Vagina (tissue), 2 donors: ENCODE measurements at regions of chr17 and their contacts with region 1.

Region 1: GRCh38 chr17:63478791-63479494 is 2.1 kb downstream of the ACE start:
- DNase-seq: no peak
- H3K4me3 ChIP-seq: no peak overlapping the region
- H3K27ac ChIP-seq: no peak overlapping the region
- H3K4me1 ChIP-seq: peaks cover 32% of the 10 kb centered on the region
- H3K27me3 ChIP-seq: no peaks in the 10 kb centered on the region
- CTCF ChIP-seq: peak in 2 of 3 experiments; percentile 61 to 66
- POLR2A ChIP-seq: no peak

Region 2: DNA sequence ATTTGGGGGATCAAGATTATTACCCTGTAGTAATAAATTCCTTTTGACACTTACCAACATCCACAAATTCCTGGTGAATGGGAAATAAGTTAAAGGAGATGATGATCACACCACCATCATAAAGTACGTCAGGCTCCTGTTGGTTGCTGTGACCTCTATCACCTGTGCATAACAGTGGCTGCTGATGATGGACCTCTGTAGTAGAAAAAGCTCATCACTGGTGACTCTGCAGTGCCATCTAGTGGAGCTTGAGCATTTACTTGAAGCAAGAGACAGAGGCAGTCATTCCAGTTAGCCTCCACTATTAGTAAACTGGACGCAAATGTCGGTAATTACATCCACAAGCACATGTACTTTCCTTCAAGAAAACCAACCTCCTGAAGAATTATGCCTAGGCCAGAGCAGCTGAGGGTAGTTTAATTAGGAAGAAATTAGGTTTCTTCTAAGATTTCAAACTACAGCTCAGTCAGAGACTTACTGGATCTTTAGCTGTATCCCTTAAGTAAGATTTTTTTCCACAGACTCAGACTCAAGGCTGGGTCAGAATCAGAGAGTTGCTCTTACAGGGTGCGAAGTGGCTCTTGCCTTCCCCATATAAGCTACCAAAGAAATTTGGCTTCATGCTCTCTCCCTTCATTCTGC is 72.1 kb before region 1 on chr17:
- intact Hi-C with region 1: no loop called
- DNase-seq: no peak
- H3K4me3 ChIP-seq: no peak overlapping the region
- H3K27ac ChIP-seq: no peak overlapping the region
- H3K4me1 ChIP-seq: no peaks in the 10 kb centered on the region
- H3K27me3 ChIP-seq: no peaks in the 10 kb centered on the region
- CTCF ChIP-seq: peak; percentile 59 to 81 (median 72)
- POLR2A ChIP-seq: no peak

Region 3: DNA sequence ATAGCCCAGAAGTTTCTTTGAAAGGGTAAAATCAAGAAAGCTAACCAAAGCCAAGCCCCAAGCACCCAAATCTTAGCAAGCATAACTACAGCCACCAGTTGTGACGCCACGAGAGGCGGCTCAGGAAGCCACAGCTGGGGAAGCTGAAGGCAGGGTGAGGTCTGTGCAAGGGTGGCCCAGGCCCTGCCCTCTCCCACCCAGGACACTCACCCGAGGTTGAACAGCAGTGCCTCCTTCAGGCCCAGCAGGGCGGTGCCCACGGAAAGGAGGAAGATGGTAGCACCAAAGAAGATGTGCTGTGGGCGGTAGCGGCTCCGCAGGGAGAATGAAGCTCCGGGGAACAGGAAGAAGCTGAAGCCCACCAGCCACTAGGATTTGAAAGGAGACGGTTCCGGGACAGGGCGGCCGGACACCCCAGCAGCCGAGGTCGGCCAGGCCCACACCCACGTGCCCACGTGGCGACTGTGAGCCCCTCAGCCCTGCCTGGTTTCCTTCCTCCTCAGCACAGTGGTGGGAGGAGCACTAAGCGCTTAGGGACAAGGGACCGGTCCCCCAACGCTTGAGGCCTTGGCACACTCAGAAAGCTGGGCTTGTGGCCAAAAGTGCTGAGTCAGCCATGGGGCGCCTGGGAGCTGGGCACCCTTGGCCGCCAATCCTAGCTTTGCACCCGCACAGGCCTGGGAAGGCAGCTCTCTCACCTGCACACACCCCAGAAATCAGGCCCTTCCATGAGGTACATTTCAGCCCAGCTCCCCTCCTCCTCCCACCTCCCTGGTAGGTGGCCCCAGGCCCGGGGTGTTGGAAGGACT is 43.9 kb before region 1 on chr17:
- intact Hi-C with region 1: loop called (anchors 5 kb)
- DNase-seq: no peak
- H3K4me3 ChIP-seq: no peak overlapping the region
- H3K27ac ChIP-seq: peak overlapping the region; percentile 69
- H3K4me1 ChIP-seq: peaks cover 82% of the 10 kb centered on the region
- H3K27me3 ChIP-seq: no peaks in the 10 kb centered on the region
- CTCF ChIP-seq: no peak
- POLR2A ChIP-seq: no peak